Activated CD4-positive, alpha-beta memory T cell treated with anti-CD3 and anti-CD28 coated beads, Interleukin-2, amount 10 ng/mL, durations not matched to agents 7 days and 5 days (primary cell): ENCODE measurements at regions of chrX and their contacts with region 1.

Region 1: DNA sequence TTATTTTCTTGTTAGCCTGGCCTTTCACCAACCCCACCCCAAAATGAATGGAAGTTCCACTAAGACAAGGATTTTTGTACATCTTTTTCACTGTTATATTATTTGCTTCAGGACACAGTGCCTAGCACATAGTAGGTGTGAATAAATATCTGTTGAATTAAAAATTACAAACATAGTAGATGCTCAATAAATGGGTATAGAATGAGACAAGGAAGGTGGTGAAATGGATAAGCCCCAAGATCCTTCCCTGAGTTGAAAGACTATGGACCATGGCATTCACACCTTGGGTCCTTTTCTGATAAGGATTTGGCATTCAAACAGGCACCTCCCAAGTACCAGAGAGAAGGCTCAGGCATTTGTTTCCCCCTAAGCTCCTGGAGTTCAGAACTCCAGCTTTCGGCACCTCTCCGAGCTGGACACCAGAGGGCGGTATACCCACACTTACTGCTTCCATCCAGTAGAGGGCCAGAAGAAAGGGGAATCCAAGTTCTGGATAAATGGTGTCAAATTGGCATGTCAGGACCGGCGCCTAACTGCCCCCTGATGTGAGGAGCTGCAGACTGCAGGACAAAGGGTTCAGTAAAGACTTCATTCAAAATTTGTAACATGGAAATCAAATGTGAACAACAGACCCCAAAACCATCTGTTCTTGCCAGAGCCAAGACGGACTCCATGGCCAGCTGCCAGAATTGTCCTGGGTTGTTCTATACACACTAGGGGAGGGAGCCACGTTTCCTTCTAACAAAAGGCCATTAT is 193.0 kb downstream of the GPC3 start:
- DNase-seq: peak; percentile 60
- H3K4me3 Mint-ChIP-seq: no peak overlapping the region
- H3K27ac Mint-ChIP-seq: no peak overlapping the region
- H3K4me1 Mint-ChIP-seq: no peaks in the 10 kb centered on the region
- H3K27me3 Mint-ChIP-seq: no peaks in the 10 kb centered on the region

Region 2: GRCh38 chrX:133859860-133860259 is 67.5 kb after region 1 on chrX:
- CTCF ChIA-PET with region 1: no interaction called
- POLR2A ChIA-PET with region 1: no interaction called
- DNase-seq: no peak
- H3K4me3 Mint-ChIP-seq: no peak overlapping the region
- H3K27ac Mint-ChIP-seq: no peak overlapping the region
- H3K4me1 Mint-ChIP-seq: no peaks in the 10 kb centered on the region
- H3K27me3 Mint-ChIP-seq: peaks cover 3% of the 10 kb centered on the region

Region 3: DNA sequence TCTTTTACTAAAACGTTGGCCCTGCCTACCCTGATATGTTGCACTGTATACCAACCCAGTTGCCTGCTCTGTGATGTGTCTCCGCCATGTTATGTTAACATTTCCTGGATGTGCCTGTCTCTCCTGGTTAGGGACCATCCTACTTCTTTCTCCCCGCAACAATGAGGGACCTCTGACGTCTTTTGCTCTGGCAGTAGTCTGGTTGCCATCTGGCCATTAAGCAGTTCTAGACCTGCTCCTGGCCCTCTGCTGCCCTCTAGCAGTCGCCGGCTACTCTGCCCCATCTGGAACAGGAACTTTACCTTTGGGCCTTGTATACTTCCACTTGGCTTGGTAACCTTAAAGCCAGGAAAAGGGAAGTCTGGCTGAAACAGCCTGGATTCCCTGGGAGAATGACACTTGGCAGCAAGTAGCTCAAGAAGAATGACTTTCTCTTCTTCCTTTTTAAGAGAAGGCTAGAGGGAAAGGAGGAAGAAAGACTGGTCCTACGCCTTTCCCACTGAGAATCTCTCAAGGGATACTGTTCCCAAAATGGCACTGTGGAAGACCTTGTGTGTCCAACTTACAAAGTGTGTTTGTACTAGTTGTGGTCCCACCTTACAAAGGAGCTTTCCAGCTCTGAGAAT is 129.5 kb after region 1 on chrX:
- CTCF ChIA-PET with region 1: interaction called, 15 read pairs
- POLR2A ChIA-PET with region 1: no interaction called
- DNase-seq: peak; percentile 31
- H3K4me3 Mint-ChIP-seq: no peak overlapping the region
- H3K27ac Mint-ChIP-seq: no peak overlapping the region
- H3K4me1 Mint-ChIP-seq: peaks cover 15% of the 10 kb centered on the region
- H3K27me3 Mint-ChIP-seq: no peaks in the 10 kb centered on the region

Region 4: GRCh38 chrX:134026565-134027311 is 234.4 kb after region 1 on chrX:
- CTCF ChIA-PET with region 1: interaction called, 10 read pairs
- POLR2A ChIA-PET with region 1: no interaction called
- DNase-seq: peak; percentile 17
- H3K4me3 Mint-ChIP-seq: no peak overlapping the region
- H3K27ac Mint-ChIP-seq: no peak overlapping the region
- H3K4me1 Mint-ChIP-seq: no peaks in the 10 kb centered on the region
- H3K27me3 Mint-ChIP-seq: no peaks in the 10 kb centered on the region

Region 5: GRCh38 chrX:134254511-134254910 is 462.1 kb after region 1 on chrX:
- CTCF ChIA-PET with region 1: interaction called, 10 read pairs
- POLR2A ChIA-PET with region 1: no interaction called
- DNase-seq: no peak
- H3K4me3 Mint-ChIP-seq: no peak overlapping the region
- H3K27ac Mint-ChIP-seq: no peak overlapping the region
- H3K4me1 Mint-ChIP-seq: peaks cover 1% of the 10 kb centered on the region
- H3K27me3 Mint-ChIP-seq: peaks cover 1% of the 10 kb centered on the region